Gastrocnemius medialis (tissue), 4 donors: ENCODE measurements at regions of chr2 and their contacts with region 1.

Region 1: GRCh38 chr2:39593439-39594393 is 72.0 kb upstream of the TMEM178A start:
- DNase-seq: peak; percentile 20 to 31
- ATAC-seq: peak; percentile 79 to 86
- H3K4me3 ChIP-seq: no peak overlapping the region
- H3K27ac ChIP-seq: no peak overlapping the region
- H3K4me1 ChIP-seq: no peaks in the 10 kb centered on the region
- H3K27me3 ChIP-seq: no peaks in the 10 kb centered on the region
- CTCF ChIP-seq: peak; percentile 41 to 60 (median 53)
- POLR2A ChIP-seq: no peak

Region 2: GRCh38 chr2:39696838-39697237 is 103.1 kb after region 1 on chr2:
- in situ Hi-C with region 1: no loop called
- intact Hi-C with region 1: loop called (anchors 2 kb)
- DNase-seq: no peak
- ATAC-seq: peak in 1 of 2 donors; percentile 36
- H3K4me3 ChIP-seq: no peak overlapping the region
- H3K27ac ChIP-seq: peak overlapping the region; percentile 38 to 61 (median 48)
- H3K4me1 ChIP-seq: peaks cover 24 to 29% of the 10 kb centered on the region in 2 donors
- H3K27me3 ChIP-seq: no peaks in the 10 kb centered on the region
- CTCF ChIP-seq: peak; percentile 19 to 36 (median 31)
- POLR2A ChIP-seq: no peak

Region 3: DNA sequence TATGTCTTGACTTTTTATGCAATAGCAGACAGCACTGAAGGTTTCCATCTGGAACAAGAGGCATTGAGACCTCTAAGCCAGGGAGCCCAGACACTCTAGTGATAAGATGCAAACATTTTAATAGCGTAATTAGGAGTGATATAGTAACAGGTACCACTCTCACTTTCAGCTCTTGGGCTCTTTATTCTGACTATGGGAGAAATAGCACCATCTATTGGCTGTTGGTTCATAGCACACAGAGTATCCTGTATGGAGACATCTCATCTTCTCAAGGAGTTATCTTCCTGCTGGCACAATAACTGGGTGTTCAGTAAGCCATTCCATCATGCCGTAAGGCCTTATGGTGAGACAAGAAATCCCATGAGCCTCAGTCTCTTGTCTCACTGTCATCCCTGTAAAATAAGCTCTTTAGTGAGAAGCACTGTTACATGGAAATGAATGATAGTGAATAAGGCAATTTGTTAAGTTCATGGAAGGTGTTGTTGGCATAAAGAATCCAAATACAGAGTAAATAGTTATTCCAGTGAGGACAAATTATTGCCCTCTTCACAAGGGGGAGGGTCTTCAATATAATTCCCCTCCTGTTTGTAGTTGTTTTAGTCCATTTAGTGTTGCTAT is 137.1 kb after region 1 on chr2:
- in situ Hi-C with region 1: no loop called
- intact Hi-C with region 1: loop called (anchors 2 kb)
- DNase-seq: no peak
- ATAC-seq: peak in 1 of 2 donors; percentile 64
- H3K4me3 ChIP-seq: no peak overlapping the region
- H3K27ac ChIP-seq: no peak overlapping the region
- H3K4me1 ChIP-seq: peaks cover 4 to 19% of the 10 kb centered on the region in 2 donors
- H3K27me3 ChIP-seq: no peaks in the 10 kb centered on the region
- CTCF ChIP-seq: peak in 4 of 5 experiments; percentile 14 to 42 (median 37)
- POLR2A ChIP-seq: no peak

Region 4: DNA sequence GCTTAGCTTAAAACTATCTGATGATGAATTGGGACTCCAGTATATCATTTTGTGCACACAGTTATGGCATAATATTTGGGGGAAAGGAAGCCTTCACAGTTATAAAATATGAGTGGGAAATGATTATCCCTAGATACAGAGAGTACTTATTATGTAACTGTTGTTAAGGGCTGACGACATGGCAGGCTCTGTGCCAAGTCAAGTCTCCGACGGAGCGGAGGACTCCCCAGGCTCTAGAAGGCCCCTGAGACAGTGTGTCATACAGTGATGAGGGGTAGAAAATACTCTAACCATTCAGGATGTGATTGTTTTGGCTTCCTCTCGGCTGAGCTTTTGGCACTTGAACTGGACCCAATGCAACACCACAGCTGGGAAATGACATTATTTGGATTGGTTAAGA is 646.4 kb after region 1 on chr2:
- in situ Hi-C with region 1: no loop called
- intact Hi-C with region 1: no loop called
- DNase-seq: peak; percentile 38 to 64
- ATAC-seq: peak; percentile 80 to 82
- H3K4me3 ChIP-seq: no peak overlapping the region
- H3K27ac ChIP-seq: no peak overlapping the region
- H3K4me1 ChIP-seq: peaks cover 8 to 9% of the 10 kb centered on the region in 2 donors
- H3K27me3 ChIP-seq: no peaks in the 10 kb centered on the region
- CTCF ChIP-seq: no peak
- POLR2A ChIP-seq: no peak